Motor neuron (in vitro differentiated cells): ENCODE measurements at regions of chr1 and their contacts with region 1.

Region 1: GRCh38 chr1:47738560-47739182 is 258.5 kb downstream of the TRABD2B start:
- ATAC-seq: peak; percentile 66 to 98 (median 80)
- H3K4me3 ChIP-seq: no peak overlapping the region
- H3K27ac ChIP-seq: no peak overlapping the region
- H3K4me1 ChIP-seq: no peaks in the 10 kb centered on the region

Region 2: DNA sequence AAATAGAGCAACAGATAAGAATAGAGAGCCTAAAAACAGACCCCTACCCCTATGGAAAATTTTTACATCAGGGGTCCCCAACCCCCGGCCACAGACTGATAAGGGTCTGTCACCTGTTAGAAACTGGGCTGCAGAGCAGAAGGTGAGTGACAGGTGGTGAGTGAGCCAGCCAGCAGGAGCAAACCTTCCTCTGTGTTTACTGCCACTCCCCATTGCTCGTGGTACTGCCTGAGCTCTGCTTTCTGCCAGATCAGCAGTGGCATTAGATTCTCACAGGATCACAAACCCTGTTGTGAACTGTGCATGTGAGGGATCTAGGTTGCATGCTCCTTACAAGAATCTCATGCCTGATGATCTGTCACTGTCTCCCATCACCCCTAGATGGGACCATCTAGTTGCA is 126.7 kb before region 1 on chr1:
- in situ Hi-C with region 1: no loop called
- ATAC-seq: no peak
- H3K4me3 ChIP-seq: no peak overlapping the region
- H3K27ac ChIP-seq: no peak overlapping the region
- H3K4me1 ChIP-seq: no peaks in the 10 kb centered on the region

Region 3: GRCh38 chr1:48039088-48040054 is 300.7 kb after region 1 on chr1:
- in situ Hi-C with region 1: loop called in 2 of 9 experiments (anchors 10 to 25 kb)
- ATAC-seq: peak; percentile 37 to 75 (median 68)
- H3K4me3 ChIP-seq: no peak overlapping the region
- H3K27ac ChIP-seq: no peak overlapping the region
- H3K4me1 ChIP-seq: peaks cover 29 to 39% of the 10 kb centered on the region in 2 donors

Region 4: GRCh38 chr1:48164571-48164970 is 425.9 kb after region 1 on chr1:
- in situ Hi-C with region 1: no loop called
- ATAC-seq: peak in 1 of 8 experiments; percentile 63
- H3K4me3 ChIP-seq: no peak overlapping the region
- H3K27ac ChIP-seq: no peak overlapping the region
- H3K4me1 ChIP-seq: peaks cover 0 to 3% of the 10 kb centered on the region in 2 donors